Activated CD8-positive, alpha-beta T cell treated with anti-CD3 and anti-CD28 coated beads, Interleukin-2, amount 10 ng/mL, durations not matched to agents 7 days and 5 days (primary cell): ENCODE measurements at regions of chr15 and their contacts with region 1.

Region 1: GRCh38 chr15:92831655-92832328 is 68.3 kb upstream of the CHD2 start:
- DNase-seq: peak; percentile 94
- ATAC-seq: peak; percentile 99
- H3K4me3 Mint-ChIP-seq: peak overlapping the region; percentile 73
- H3K27ac Mint-ChIP-seq: peak overlapping the region; percentile 95
- H3K4me1 Mint-ChIP-seq: peaks cover 56% of the 10 kb centered on the region
- H3K27me3 Mint-ChIP-seq: no peaks in the 10 kb centered on the region

Region 2: GRCh38 chr15:92820236-92821021 is 11.4 kb before region 1 on chr15:
- CTCF ChIA-PET with region 1: interaction called, 41 read pairs
- POLR2A ChIA-PET with region 1: interaction called, 74 read pairs
- DNase-seq: peak; percentile 89
- ATAC-seq: peak; percentile 85
- H3K4me3 Mint-ChIP-seq: peak overlapping the region; percentile 75
- H3K27ac Mint-ChIP-seq: peak overlapping the region; percentile 79
- H3K4me1 Mint-ChIP-seq: peaks cover 58% of the 10 kb centered on the region
- H3K27me3 Mint-ChIP-seq: no peaks in the 10 kb centered on the region

Region 3: DNA sequence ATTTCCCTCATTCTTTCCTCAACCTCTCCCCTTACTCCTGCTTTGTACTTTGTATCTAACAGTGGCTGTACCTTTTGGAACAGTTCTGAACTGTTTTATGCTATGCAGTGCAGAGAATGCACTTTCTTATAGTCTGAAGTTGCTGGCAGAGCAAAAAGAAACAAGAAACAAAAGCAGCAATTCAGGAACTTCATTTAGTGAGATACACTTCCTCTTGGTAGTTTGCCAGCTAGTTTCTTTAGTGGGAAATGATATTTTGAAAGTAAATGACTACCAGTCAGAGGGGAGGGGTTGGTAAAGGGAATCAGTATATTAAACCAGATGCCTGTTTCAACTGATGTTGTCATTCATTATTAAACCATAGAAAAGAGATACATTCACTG is 13.3 kb after region 1 on chr15:
- CTCF ChIA-PET with region 1: interaction called, 8 read pairs
- POLR2A ChIA-PET with region 1: interaction called, 20 read pairs
- DNase-seq: no peak
- ATAC-seq: peak; percentile 16
- H3K4me3 Mint-ChIP-seq: peak overlapping the region; percentile 57
- H3K27ac Mint-ChIP-seq: peak overlapping the region; percentile 93
- H3K4me1 Mint-ChIP-seq: peaks cover 70% of the 10 kb centered on the region
- H3K27me3 Mint-ChIP-seq: no peaks in the 10 kb centered on the region

Region 4: GRCh38 chr15:92930776-92931175 is 99.0 kb after region 1 on chr15:
- CTCF ChIA-PET with region 1: no interaction called
- POLR2A ChIA-PET with region 1: no interaction called
- DNase-seq: no peak
- ATAC-seq: no peak
- H3K4me3 Mint-ChIP-seq: no peak overlapping the region
- H3K27ac Mint-ChIP-seq: no peak overlapping the region
- H3K4me1 Mint-ChIP-seq: peaks cover 31% of the 10 kb centered on the region
- H3K27me3 Mint-ChIP-seq: no peaks in the 10 kb centered on the region

Region 5: DNA sequence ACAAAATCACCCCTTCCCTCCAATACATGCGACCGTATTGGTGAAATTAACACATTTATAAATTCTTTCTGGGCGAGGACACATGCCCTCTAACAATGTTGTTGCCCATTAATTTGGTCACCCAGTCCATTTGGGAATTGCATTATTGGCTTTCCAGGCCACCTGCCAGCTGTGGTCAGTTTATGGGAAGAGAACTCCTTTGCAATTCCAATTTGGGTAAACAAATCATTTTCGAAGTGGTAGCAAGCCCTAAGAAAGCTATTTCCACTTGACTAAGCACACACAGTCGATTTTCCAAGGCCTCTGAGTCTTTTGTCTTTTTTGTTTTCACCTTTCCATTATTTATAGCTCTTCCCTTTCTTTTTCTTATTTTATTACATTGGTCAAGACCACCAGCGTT is 619.5 kb after region 1 on chr15:
- CTCF ChIA-PET with region 1: no interaction called
- POLR2A ChIA-PET with region 1: no interaction called
- DNase-seq: no peak
- ATAC-seq: no peak
- H3K4me3 Mint-ChIP-seq: no peak overlapping the region
- H3K27ac Mint-ChIP-seq: no peak overlapping the region
- H3K4me1 Mint-ChIP-seq: no peaks in the 10 kb centered on the region
- H3K27me3 Mint-ChIP-seq: peaks cover 1% of the 10 kb centered on the region